Activated naive CD8-positive, alpha-beta T cell treated with anti-CD3 and anti-CD28 coated beads, Interleukin-2, amount 10 ng/mL, durations not matched to agents 7 days and 5 days (primary cell): ENCODE measurements at regions of chrX and their contacts with region 1.

Region 1: DNA sequence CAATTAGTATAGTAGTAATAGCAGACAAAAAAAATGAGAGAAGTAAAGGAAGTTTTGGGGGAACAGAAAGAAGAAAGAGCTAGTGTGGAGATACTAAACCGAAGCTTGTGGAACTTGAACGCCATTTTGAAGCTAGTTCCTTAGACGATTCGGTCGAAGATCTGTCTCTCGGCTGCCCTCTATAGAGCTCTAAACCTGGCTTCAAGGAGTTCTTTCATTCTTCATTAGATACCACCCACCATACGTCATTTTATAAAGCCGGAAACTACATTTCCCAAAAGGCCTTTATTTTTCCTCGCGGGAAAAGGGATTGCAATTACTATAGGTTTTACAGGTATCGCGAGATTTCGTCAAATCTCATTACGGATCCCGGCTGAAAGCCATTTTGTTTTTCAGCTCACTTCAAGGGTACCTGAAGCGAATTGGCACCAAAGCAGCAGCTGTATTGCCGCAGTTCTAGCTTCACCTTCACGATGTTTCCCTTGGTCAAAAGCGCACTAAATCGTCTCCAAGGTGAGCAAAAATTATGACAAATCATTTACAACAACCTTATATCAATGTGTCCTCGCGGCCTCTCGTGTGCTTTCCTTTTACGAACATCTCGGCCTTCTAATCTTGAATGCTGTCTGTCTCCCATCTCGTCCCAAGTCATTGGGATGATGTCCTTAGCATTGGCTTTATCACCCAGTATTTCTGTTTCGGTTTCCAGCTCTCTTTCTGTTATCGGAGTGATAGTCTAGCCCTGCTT is at the start of gene COX7B:
- DNase-seq: peak; percentile 44
- ATAC-seq: peak; percentile 65
- H3K4me3 Mint-ChIP-seq: peak within 1 kb of the TSS; percentile 92
- H3K27ac Mint-ChIP-seq: peak within 1 kb of the TSS; percentile 97
- H3K4me1 Mint-ChIP-seq: peaks cover 11% of the 10 kb centered on the region
- H3K27me3 Mint-ChIP-seq: no peaks in the 10 kb centered on the region
- total RNA-seq, gene COX7B: 232 to 239 TPM

Region 2: GRCh38 chrX:77510007-77510406 is 389.2 kb before region 1 on chrX:
- POLR2A ChIA-PET with region 1: no interaction called
- DNase-seq: no peak
- ATAC-seq: no peak
- H3K4me3 Mint-ChIP-seq: no peak overlapping the region
- H3K27ac Mint-ChIP-seq: no peak overlapping the region
- H3K4me1 Mint-ChIP-seq: no peaks in the 10 kb centered on the region
- H3K27me3 Mint-ChIP-seq: no peaks in the 10 kb centered on the region

Region 3: DNA sequence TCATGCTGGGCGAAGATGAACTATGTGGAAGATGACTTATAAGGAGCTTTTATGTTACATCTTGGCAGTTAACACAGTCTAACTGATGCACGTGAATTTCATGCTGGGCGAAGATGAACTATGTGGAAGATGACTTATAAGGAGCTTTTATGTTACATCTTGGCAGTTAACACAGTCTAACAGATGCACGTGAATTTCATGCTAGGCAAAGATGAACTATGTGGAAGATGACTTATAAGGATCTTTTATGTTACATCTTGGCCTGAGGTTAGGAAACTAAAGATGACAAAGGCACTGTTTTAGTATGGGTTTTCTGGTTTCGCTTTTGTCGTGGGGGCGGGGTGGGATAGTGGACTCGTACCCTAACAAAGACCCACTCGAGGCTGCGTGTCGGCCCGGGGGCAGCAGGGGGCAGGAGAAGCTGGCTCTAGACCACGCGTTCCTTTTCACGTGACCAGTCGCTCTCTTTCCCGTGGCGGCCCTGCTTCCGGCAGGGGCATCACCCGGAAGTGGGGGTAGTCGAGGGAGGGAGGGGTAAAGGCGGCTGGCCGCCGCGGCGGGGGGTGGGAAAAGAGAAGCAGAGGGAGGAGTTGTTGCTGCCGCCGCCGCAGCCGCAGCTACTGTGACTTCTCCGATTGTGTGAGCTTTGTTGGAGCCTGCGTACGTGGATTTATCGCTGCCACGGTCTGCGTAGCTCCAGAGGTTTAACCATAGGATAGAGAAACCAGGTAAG is 11.0 kb after region 1 on chrX and contains the start of gene ATP7A:
- POLR2A ChIA-PET with region 1: interaction called, 25 read pairs
- DNase-seq: peak; percentile 83
- ATAC-seq: peak; percentile 89
- H3K4me3 Mint-ChIP-seq: peak within 1 kb of the TSS; percentile 93
- H3K27ac Mint-ChIP-seq: peak within 1 kb of the TSS; percentile 95
- H3K4me1 Mint-ChIP-seq: peaks cover 6% of the 10 kb centered on the region
- H3K27me3 Mint-ChIP-seq: no peaks in the 10 kb centered on the region
- total RNA-seq, gene ATP7A: 13.4 to 13.5 TPM